Astrocyte of the cerebellum (primary cell): ENCODE measurements at regions of chr11 and their contacts with region 1.

Region 1: DNA sequence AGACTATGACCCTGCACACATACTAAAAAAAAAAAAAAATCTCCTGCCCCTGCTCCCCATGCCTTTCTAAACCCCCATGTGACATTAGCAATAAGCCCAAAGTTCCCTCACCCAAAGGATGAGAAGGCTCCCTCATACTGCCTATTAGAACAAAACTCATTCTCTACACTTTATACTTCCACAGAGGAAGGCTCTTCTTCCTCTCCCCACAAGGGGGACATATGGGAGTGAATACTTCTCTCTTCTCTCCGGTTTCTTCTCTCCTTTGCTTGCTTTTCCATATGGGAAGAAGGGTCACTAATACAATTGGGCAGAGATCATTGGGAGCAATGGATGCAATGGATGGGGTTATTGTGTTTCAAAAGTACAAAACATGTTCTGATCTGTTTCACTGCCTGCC is 3.3 kb downstream of the OR52L1 start:
- DNase-seq: no peak
- H3K4me3 ChIP-seq: no peak overlapping the region
- CTCF ChIP-seq: no peak

Region 2: DNA sequence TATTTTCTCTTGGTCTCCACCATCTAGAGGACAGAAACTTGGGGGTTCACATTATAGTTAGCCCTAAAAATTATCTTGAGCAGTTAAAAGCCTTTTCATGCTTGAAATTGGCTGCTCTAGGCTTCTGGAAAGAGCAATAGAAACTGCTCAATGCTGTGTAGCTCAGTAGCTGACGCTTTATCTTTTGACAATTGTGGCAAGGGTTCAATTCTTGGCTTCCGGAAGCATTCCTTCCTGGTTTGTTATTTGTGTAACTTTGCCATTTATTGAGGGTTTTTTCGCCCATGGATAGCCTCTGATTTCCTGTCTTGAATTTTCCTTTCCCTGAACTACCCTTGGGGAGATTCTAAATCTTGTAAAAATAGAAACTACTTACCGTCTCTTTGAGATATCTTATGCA is 57.4 kb after region 1 on chr11:
- in situ Hi-C with region 1: loop called (anchors 5 kb)
- DNase-seq: no peak
- H3K4me3 ChIP-seq: no peak overlapping the region
- CTCF ChIP-seq: no peak